ENCODE measurements at regions of chr3 and their contacts with region 1.

Region 1: DNA sequence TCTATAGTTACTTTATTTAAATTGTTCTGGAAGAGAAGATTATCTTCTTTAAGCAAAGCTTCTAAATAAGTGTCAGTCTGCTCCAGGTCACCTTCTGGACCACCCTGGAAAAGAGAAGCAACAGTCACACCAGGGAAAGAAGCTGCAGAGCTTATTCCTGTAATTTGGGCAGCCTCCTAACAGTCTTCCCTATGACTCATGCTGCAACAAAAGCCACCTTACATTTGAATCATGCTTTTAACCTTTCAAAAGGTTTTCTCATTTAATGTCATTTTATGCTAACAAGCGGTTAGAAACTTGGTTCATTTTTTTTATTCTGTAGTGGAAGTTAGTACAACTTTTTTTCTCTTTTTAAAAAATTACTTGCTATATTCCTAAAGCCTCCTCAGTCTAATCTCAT is 5.3 kb upstream of the GUCA1C start:
- DNase-seq: no peak
- ATAC-seq: no peak
- H3K4me3 ChIP-seq: no peak overlapping the region
- H3K27ac ChIP-seq: no peak overlapping the region
- H3K4me1 ChIP-seq: no peaks in the 10 kb centered on the region
- H3K27me3 ChIP-seq: no peaks in the 10 kb centered on the region; the same call in 1 of the 2 replicates
- CTCF ChIP-seq: no peak

Region 2: GRCh38 chr3:108972482-108972881 is 13.5 kb after region 1 on chr3:
- CTCF ChIA-PET with region 1: no interaction called
- POLR2A ChIA-PET with region 1: interaction called, 19 read pairs
- in situ Hi-C with region 1: no loop called
- intact Hi-C with region 1: no loop called
- DNase-seq: no peak
- ATAC-seq: no peak
- H3K4me3 ChIP-seq: no peak overlapping the region
- H3K27ac ChIP-seq: no peak overlapping the region
- H3K4me1 ChIP-seq: no peaks in the 10 kb centered on the region
- H3K27me3 ChIP-seq: peaks cover 4% of the 10 kb centered on the region; the same call in 1 of the 2 replicates
- CTCF ChIP-seq: no peak